ENCODE measurements at regions of chr2 and their contacts with region 1.

Region 1: GRCh38 chr2:149017116-149017985 is 21.1 kb upstream of the LYPD6B start:
- DNase-seq: peak; percentile 33
- H3K4me3 ChIP-seq: no peak overlapping the region
- H3K27ac ChIP-seq: no peak overlapping the region
- H3K27me3 ChIP-seq: peaks cover 5% of the 10 kb centered on the region
- CTCF ChIP-seq: peak; percentile 92

Region 2: GRCh38 chr2:148860037-148860436 is 157.3 kb before region 1 on chr2:
- CTCF ChIA-PET with region 1: no interaction called
- POLR2A ChIA-PET with region 1: no interaction called
- DNase-seq: no peak
- H3K4me3 ChIP-seq: no peak overlapping the region
- H3K27ac ChIP-seq: no peak overlapping the region
- H3K27me3 ChIP-seq: no peaks in the 10 kb centered on the region
- CTCF ChIP-seq: no peak

Region 3: DNA sequence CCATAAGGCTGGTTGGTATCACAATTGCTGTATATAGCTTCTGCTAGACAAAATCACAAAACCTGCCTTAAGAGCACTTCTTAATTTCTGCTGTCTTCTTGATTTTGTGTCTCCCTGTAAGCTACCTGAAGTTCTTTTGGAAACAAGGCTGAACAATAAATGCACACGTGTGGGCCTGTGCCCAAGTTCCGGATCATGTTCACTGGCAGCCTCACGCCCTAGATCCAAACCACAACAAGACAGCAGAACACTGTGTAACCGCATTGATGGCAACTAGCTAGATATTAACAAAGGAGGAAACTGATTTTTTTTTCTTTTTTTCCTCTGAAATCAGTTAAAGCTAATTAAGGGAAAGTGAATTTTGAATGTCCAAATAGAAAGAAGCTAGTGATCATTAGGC is 60.3 kb before region 1 on chr2:
- CTCF ChIA-PET with region 1: no interaction called
- POLR2A ChIA-PET with region 1: no interaction called
- DNase-seq: no peak
- H3K4me3 ChIP-seq: no peak overlapping the region
- H3K27ac ChIP-seq: no peak overlapping the region
- H3K27me3 ChIP-seq: no peaks in the 10 kb centered on the region
- CTCF ChIP-seq: no peak

Region 4: GRCh38 chr2:149006883-149007540 is 10.3 kb before region 1 on chr2:
- CTCF ChIA-PET with region 1: interaction called, 20 read pairs
- POLR2A ChIA-PET with region 1: no interaction called
- DNase-seq: no peak
- H3K4me3 ChIP-seq: no peak overlapping the region
- H3K27ac ChIP-seq: no peak overlapping the region
- H3K27me3 ChIP-seq: peaks cover 6% of the 10 kb centered on the region
- CTCF ChIP-seq: no peak

Region 5: DNA sequence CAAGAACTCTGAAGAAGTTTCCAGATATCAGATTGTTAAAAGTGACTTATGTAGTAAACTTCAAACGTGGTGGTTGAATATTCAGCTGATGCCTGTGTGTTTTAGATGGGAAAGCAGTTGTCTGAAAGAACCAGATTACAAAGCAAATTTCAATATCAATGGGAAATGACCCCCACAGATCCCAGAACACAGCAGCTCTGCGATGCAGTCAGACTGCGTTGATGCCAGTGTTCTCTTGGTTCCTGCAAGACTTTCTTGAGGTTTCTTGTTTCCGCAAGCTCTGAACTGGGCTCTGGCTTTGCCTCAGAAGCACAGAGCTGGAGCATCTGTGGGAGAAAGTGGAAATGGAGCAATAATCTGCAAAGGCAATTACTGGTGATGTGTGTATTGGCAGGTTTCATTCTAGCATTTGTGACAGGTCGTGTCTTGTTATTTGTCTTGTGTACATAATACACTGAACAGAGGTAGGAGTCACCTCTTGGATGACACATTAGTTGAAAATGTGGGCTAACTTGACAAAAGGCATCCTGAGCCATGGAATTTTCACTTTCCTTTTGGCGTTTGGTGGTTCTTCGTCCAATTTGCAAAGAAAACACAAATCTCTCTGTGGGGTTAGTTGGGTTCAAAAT is 10.4 kb after region 1 on chr2:
- CTCF ChIA-PET with region 1: interaction called, 19 read pairs
- POLR2A ChIA-PET with region 1: no interaction called
- DNase-seq: no peak
- H3K4me3 ChIP-seq: no peak overlapping the region
- H3K27ac ChIP-seq: no peak overlapping the region
- H3K27me3 ChIP-seq: peaks cover 6% of the 10 kb centered on the region
- CTCF ChIP-seq: no peak

Region 6: DNA sequence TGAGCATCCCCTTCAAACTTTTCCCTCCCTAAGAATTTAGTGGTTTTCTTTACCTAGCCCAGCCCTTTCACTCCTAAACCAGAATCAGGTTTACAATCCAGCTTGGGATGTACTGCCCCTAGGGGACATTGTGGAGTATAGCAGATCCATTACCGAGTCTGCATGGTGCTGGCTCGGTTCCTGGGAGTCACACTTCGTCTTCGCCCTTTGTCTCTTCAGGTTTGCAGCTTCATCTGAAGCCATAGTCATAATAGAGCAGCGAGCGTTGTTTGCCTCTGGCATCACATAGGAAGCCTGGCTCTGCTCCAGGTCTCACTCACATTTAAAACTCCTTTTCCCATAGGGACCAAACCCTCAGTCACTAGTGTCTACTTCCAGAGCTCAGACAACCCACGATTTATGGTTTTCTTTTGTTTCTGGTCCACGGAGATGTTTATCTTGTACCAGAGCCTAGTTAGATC is 296.2 kb after region 1 on chr2:
- CTCF ChIA-PET with region 1: interaction called, 47 read pairs
- POLR2A ChIA-PET with region 1: no interaction called
- DNase-seq: no peak
- H3K4me3 ChIP-seq: no peak overlapping the region
- H3K27ac ChIP-seq: no peak overlapping the region
- H3K27me3 ChIP-seq: peaks cover 2% of the 10 kb centered on the region
- CTCF ChIP-seq: peak; percentile 85

Region 7: DNA sequence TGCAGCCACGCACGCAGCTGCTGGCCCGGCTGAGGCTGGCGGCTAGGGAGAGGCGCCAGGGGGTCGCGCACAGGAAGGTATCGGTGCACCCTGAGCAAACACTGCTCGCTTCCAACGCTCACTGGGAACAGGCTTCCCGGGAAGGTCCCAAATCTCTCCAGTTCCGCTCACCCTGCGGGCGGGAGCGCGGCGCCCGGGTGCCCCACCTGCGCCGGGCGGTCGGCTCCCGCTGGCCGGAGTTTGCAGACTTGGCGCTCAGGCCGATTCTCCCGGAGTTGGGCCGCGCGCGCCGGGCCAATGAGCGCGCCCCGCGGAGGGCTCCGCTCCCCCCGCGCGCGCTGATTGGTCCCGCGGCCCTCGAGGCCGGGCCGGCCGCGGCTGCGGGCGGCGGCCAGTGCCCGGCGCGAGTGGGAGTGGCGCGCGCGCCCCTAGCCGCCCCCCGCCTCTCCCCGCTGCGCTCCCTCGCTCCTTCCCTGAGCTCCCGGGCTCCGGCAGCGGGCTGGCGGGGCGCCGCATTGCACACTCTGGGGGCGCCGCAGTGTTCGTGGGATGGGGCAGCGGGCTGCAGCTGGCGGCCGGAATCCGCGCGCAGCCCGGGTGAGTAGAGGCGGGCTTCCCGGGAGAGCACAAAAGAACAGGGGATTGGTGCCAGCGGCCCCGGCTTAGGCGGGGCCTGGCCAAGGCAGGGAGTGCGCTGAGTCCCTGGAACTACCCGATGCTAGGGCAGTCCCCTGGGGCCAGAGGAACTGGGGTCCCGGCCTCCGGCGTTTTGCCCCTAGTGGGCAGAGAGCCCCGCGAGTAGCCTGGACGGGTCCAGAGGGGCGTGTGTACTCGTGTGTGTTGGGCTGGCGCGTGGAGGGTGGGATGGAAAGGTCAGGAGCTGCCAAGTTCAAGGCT is 313.0 kb after region 1 on chr2 and contains the start of gene LYPD6:
- CTCF ChIA-PET with region 1: interaction called, 15 read pairs
- POLR2A ChIA-PET with region 1: no interaction called
- DNase-seq: no peak
- H3K4me3 ChIP-seq: peak within 1 kb of the TSS; percentile 69
- H3K27ac ChIP-seq: peak within 1 kb of the TSS; percentile 4
- H3K27me3 ChIP-seq: peaks cover 12% of the 10 kb centered on the region
- CTCF ChIP-seq: peak; percentile 8
- polyA plus RNA-seq, gene LYPD6: 1.1 and 1.3 TPM in 2 replicates

Region 8: DNA sequence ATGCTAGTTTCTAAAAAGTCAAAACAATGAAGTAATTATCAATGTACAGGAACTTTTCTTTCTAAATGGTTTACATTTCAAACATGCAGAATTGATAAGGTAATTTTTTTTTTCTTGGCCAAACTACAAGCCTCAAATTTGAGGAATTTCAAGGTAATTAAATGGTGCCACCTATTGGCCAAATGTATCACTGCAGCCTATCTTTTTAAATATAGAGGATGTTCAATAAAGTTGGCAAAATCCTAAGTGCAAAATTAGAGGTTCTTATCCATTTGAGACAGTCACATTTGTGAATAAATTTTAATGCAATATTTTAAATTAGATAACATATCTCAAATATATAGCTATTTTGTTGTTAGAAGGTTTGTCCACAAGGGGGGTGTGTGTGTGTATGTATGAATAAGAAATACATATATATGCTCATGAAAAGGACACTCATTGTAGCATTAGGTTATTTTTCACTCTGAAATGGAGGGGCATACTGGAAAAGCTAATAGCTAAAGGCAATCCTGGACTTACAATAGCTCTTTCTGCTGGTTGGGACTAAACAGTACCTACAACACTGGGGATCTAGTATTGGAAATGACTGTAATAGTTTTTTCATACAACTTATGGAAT is 544.1 kb after region 1 on chr2:
- CTCF ChIA-PET with region 1: interaction called, 212 read pairs
- POLR2A ChIA-PET with region 1: no interaction called
- DNase-seq: no peak
- H3K4me3 ChIP-seq: no peak overlapping the region
- H3K27ac ChIP-seq: no peak overlapping the region
- H3K27me3 ChIP-seq: no peaks in the 10 kb centered on the region
- CTCF ChIP-seq: peak; percentile 77

Region 9: GRCh38 chr2:149573760-149574159 is 556.4 kb after region 1 on chr2:
- CTCF ChIA-PET with region 1: interaction called, 63 read pairs
- POLR2A ChIA-PET with region 1: no interaction called
- DNase-seq: no peak
- H3K4me3 ChIP-seq: no peak overlapping the region
- H3K27ac ChIP-seq: no peak overlapping the region
- H3K27me3 ChIP-seq: no peaks in the 10 kb centered on the region
- CTCF ChIP-seq: peak; percentile 50

Measured in AG04450 (cell line).